Activated CD8-positive, alpha-beta T cell treated with anti-CD3 and anti-CD28 coated beads for 36 hours (primary cell): ENCODE measurements at regions of chr11 and their contacts with region 1.

Region 1: GRCh38 chr11:8180469-8180868 is 11.6 kb upstream of the RIC3 start:
- DNase-seq: no peak
- ATAC-seq: no peak
- H3K4me3 Mint-ChIP-seq: no peak overlapping the region
- H3K27ac Mint-ChIP-seq: no peak overlapping the region
- H3K4me1 Mint-ChIP-seq: no peaks in the 10 kb centered on the region
- H3K27me3 Mint-ChIP-seq: peaks cover 8% of the 10 kb centered on the region
- CTCF ChIP-seq: no peak

Region 2: GRCh38 chr11:8192016-8192895 is 11.8 kb after region 1 on chr11:
- CTCF ChIA-PET with region 1: interaction called, 23 read pairs
- POLR2A ChIA-PET with region 1: interaction called, 3 read pairs
- intact Hi-C with region 1: no loop called
- DNase-seq: peak; percentile 59
- ATAC-seq: peak; percentile 62
- H3K4me3 Mint-ChIP-seq: no peak overlapping the region
- H3K27ac Mint-ChIP-seq: no peak overlapping the region
- H3K4me1 Mint-ChIP-seq: no peaks in the 10 kb centered on the region
- H3K27me3 Mint-ChIP-seq: peaks cover 30% of the 10 kb centered on the region
- CTCF ChIP-seq: peak; percentile 68

Region 3: DNA sequence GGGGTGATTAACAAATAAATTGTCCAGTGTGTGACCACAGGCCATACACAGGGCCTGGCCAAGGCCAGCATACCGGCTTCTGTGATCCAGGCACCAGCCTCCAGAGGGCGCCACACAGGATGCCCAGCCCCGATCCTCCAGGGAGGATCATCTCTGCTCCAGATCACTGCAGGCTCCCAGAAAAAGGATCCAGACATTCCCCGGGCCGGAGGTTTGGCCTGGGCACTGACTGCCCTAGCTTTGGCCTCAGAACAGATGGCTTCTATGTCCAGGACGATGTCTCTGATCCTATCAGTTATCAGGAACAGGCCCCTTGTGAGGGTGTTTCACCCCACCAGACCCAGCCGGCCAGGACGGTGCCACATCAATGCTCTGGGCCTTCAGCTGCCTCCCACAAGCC is 157.7 kb after region 1 on chr11:
- CTCF ChIA-PET with region 1: no interaction called
- POLR2A ChIA-PET with region 1: no interaction called
- intact Hi-C with region 1: no loop called
- DNase-seq: peak; percentile 52
- ATAC-seq: peak; percentile 74
- H3K4me3 Mint-ChIP-seq: no peak overlapping the region
- H3K27ac Mint-ChIP-seq: no peak overlapping the region
- H3K4me1 Mint-ChIP-seq: no peaks in the 10 kb centered on the region
- H3K27me3 Mint-ChIP-seq: peaks cover 1% of the 10 kb centered on the region
- CTCF ChIP-seq: peak; percentile 85